Panc1 (cell line): ENCODE measurements at regions of chr7 and their contacts with region 1.

Region 1: DNA sequence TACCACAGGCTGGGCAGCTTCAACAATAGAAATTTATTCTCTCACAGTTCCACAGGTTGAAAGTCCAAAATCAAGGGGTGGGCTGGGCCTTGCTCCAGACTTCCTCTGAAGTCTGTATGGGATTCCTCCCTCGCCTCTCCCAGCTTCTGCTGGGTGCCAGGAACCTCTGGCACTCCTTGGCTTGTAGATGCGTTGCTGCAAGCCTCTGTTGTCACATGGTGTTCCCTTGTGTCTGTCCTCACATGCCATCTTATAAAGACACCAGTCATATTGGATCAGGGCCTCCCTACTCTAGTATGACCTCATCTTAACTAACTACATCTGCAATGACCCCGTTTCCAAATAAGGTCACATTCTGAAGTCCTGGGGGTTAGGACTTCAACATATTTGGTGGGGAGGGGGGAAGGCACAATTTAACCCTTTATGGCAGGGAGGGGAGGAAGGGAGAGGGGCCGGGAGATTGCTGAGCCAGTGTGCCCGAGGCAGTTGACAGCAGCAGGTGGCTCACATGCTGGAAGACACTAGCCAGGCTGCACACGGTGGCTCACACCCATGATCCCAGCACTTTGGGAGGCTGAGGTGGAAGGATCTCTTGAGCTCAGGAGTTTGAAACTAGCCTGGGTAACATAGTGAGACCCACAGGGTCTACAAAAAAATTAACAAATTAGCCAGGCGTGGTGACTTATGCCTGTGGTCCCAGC is 18.8 kb downstream of the ZNF282 start:
- DNase-seq: no peak
- ATAC-seq: no peak
- H3K4me3 ChIP-seq: no peak overlapping the region
- H3K27ac ChIP-seq: no peak overlapping the region
- H3K4me1 ChIP-seq: no peaks in the 10 kb centered on the region
- H3K27me3 ChIP-seq: no peaks in the 10 kb centered on the region
- CTCF ChIP-seq: no peak

Region 2: DNA sequence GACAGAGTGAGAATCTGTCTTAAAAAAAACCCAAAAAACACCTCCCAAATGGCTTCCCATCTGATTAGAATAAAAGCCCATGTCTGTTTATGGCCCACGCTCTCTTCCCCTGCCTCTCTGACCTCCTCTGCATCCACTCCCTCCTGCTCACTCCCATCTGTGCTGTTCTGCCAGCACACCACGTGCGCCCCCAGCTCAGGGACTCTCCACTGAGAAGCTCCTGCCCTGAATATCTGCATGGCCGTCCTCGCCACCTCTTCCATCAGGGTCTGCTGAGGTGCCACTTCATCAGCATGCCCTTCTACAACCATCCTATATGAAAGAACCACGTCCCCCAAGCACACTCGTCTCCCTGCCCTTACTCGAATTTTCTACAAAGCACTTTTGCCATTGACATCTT is 12.4 kb before region 1 on chr7:
- CTCF ChIA-PET with region 1: no interaction called
- POLR2A ChIA-PET with region 1: interaction called, 10 read pairs
- in situ Hi-C with region 1: no loop called
- intact Hi-C with region 1: no loop called
- DNase-seq: no peak
- ATAC-seq: no peak
- H3K4me3 ChIP-seq: no peak overlapping the region
- H3K27ac ChIP-seq: no peak overlapping the region
- H3K4me1 ChIP-seq: peaks cover 5% of the 10 kb centered on the region
- H3K27me3 ChIP-seq: no peaks in the 10 kb centered on the region
- CTCF ChIP-seq: no peak